ENCODE measurements at regions of chr11 and their contacts with region 1.

Region 1: GRCh38 chr11:132028380-132029240 is 658.2 kb downstream of the NTM start:
- DNase-seq: peak; percentile 4
- ATAC-seq: 0 out of 2 replicates have a peak, but pooled peaks have one; percentile 56
- H3K4me3 ChIP-seq: no peak overlapping the region
- H3K27ac ChIP-seq: no peak overlapping the region
- H3K4me1 ChIP-seq: no peaks in the 10 kb centered on the region
- H3K27me3 ChIP-seq: no peaks in the 10 kb centered on the region
- CTCF ChIP-seq: peak; percentile 71

Region 2: DNA sequence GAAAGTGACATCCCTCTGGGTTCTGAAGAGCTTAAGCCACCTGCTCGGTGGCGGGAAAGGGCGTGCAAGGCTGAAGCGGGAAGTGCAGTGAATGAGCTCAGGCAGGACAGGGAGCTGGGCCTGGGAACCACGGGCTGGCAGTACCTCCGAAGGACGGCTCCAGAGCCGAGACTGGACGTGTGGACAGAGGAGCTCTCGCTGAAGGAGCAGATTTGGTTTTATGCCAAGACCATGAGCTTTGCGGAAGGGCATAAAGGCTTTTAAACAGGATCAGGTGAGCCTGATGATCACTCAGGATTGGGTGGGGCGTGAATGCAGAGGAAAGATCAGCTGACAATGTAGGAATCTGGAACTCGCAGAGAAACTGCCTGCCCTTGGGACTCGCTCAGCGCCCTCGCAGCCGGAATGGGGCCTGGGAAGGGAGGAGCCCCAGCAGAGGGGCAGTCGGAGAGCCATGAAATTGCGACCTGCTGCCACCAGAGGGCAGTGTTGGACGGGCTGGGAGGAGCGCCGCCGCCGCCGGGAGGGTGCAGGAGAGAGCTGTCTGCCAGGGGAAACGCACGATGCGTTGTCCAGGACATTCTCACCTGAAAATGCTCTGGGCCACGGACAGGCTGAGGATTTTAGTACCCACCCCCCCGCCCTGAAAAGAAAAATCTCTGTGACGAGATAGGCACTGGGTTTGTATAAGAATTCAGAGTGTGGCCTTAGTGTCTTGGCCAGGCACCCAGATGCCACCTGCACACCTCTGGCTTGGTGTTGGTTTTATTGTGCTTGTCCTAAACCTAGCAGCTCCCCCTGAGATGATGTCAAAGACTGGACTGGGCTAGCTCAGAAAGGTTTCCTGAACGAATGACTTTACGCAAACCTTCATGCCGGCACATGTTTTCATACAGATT is 333.8 kb before region 1 on chr11:
- CTCF ChIA-PET with region 1: no interaction called
- POLR2A ChIA-PET with region 1: no interaction called
- in situ Hi-C with region 1: no loop called
- intact Hi-C with region 1: loop called (anchors 10 kb)
- DNase-seq: peak; percentile 22
- ATAC-seq: peak; percentile 90
- H3K4me3 ChIP-seq: no peak overlapping the region
- H3K27ac ChIP-seq: no peak overlapping the region
- H3K4me1 ChIP-seq: no peaks in the 10 kb centered on the region
- H3K27me3 ChIP-seq: peaks cover 7% of the 10 kb centered on the region; the same call in 1 of the 2 replicates
- CTCF ChIP-seq: peak; percentile 97

Region 3: DNA sequence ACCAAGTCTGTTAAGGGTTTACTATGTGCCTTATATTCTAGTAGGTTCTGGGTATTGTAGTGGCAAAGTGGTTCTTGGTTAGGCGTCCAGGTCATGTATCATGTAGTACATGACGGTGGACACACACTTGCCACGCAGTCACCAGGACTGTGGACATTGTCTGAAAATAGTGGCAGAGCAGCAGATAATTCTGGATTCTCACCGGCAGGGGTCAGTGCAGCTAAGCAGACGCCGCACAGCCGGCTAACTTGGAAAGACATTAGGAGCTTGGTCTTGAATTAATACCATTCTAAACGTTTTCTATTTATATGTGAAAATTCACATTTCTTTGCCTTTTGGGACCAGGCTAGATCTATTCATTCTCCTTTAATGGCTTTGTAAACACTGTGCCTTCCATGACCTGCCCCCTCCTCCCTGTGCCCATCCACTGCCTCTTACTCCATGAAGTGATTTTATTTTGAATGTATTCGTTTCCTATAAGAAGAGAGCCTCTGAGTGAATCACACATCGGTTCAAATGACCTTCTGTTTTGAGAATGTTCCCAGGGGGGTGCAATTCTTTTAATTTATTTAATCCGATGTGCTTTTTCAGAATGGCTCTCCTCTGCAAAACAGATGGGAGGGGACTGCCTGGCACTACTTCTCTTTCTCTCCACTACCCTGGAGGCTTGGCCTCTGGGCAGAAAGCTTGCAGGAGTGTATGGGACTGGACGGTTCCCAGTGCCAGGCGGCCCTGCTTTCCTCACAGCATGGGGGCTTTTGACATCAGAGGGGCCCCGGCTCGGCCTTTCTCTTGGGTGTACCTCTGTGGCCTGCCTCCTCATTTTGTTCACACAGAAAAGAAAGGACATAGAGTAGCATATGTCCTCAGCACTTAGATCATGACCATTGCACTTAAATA is 280.2 kb before region 1 on chr11:
- CTCF ChIA-PET with region 1: no interaction called
- POLR2A ChIA-PET with region 1: no interaction called
- in situ Hi-C with region 1: no loop called
- intact Hi-C with region 1: loop called (anchors 5 kb)
- DNase-seq: no peak
- ATAC-seq: peak; percentile 89
- H3K4me3 ChIP-seq: no peak overlapping the region
- H3K27ac ChIP-seq: no peak overlapping the region
- H3K4me1 ChIP-seq: no peaks in the 10 kb centered on the region
- H3K27me3 ChIP-seq: peaks cover 5% of the 10 kb centered on the region; the same call in 1 of the 2 replicates
- CTCF ChIP-seq: peak; percentile 94